Activated CD4-positive, alpha-beta T cell treated with anti-CD3 and anti-CD28 coated beads for 36 hours (primary cell): ENCODE measurements at regions of chr1 and their contacts with region 1.

Region 1: DNA sequence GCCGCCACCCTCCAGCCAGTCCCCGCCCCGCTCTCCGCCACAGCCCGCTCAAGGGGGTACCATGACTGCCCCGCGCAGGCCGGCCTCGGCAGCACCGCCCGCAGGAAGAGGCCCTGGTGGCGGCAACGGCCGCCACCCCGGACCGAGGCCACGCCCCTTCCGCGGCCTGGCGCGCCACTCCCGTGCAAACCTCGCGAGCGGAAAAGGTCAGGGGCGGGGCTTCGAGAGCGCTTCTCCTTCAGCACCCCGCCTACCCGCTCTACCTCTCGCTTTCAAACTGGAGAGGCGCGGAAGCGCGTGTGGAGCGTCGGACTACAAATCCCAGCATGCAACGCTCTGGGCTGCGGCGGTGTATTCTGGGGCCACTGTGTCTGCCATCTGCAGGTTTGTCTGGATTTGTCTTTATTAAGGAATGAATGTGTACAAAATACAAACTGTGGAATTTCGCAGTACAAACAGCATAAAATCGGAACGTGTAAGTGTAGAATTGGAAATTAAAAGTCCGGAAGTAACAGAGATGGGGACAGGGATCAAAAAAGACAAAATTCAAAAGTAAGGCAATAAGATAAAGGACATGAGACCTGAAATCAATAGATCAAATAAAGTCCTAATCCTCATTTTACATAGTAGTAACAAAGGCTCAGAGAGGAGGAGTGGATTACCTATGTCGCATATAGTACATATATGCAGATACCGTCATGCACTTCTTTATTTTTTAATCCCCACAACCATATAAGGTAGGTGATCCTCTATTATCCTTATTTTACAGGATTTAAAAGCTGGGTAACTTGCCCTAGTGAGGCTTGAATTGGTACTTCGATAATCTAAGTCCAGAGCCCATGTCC is 464 bp upstream of the ADSS2 start:
- DNase-seq: peak; percentile 99
- ATAC-seq: peak; percentile 91
- H3K4me3 Mint-ChIP-seq: peak overlapping the region; percentile 97
- H3K27ac Mint-ChIP-seq: peak overlapping the region; percentile 97
- H3K4me1 Mint-ChIP-seq: peaks cover 40% of the 10 kb centered on the region
- H3K27me3 Mint-ChIP-seq: no peaks in the 10 kb centered on the region

Region 2: GRCh38 chr1:244047621-244048471 is 404.3 kb before region 1 on chr1:
- CTCF ChIA-PET with region 1: no interaction called
- POLR2A ChIA-PET with region 1: no interaction called
- intact Hi-C with region 1: loop called (anchors 1 to 5 kb)
- DNase-seq: peak; percentile 98
- ATAC-seq: peak; percentile 92
- H3K4me3 Mint-ChIP-seq: peak overlapping the region; percentile 93
- H3K27ac Mint-ChIP-seq: peak overlapping the region; percentile 97
- H3K4me1 Mint-ChIP-seq: peaks cover 35% of the 10 kb centered on the region
- H3K27me3 Mint-ChIP-seq: no peaks in the 10 kb centered on the region

Region 3: GRCh38 chr1:244272471-244273261 is 179.5 kb before region 1 on chr1:
- CTCF ChIA-PET with region 1: no interaction called
- POLR2A ChIA-PET with region 1: no interaction called
- intact Hi-C with region 1: no loop called
- DNase-seq: peak; percentile 80
- ATAC-seq: peak; percentile 90
- H3K4me3 Mint-ChIP-seq: no peak overlapping the region
- H3K27ac Mint-ChIP-seq: no peak overlapping the region
- H3K4me1 Mint-ChIP-seq: peaks cover 9% of the 10 kb centered on the region
- H3K27me3 Mint-ChIP-seq: no peaks in the 10 kb centered on the region

Region 4: GRCh38 chr1:244319283-244320132 is 132.7 kb before region 1 on chr1:
- CTCF ChIA-PET with region 1: no interaction called
- POLR2A ChIA-PET with region 1: no interaction called
- intact Hi-C with region 1: loop called (anchors 2 to 5 kb)
- DNase-seq: peak; percentile 78
- ATAC-seq: peak; percentile 94
- H3K4me3 Mint-ChIP-seq: peak overlapping the region; percentile 31
- H3K27ac Mint-ChIP-seq: peak overlapping the region; percentile 66
- H3K4me1 Mint-ChIP-seq: peaks cover 25% of the 10 kb centered on the region
- H3K27me3 Mint-ChIP-seq: no peaks in the 10 kb centered on the region

Region 5: GRCh38 chr1:244325056-244325764 is 127.0 kb before region 1 on chr1:
- CTCF ChIA-PET with region 1: no interaction called
- POLR2A ChIA-PET with region 1: no interaction called
- intact Hi-C with region 1: loop called (anchors 2 to 5 kb)
- DNase-seq: peak; percentile 39
- ATAC-seq: peak; percentile 87
- H3K4me3 Mint-ChIP-seq: peak overlapping the region; percentile 74
- H3K27ac Mint-ChIP-seq: peak overlapping the region; percentile 88
- H3K4me1 Mint-ChIP-seq: peaks cover 24% of the 10 kb centered on the region
- H3K27me3 Mint-ChIP-seq: no peaks in the 10 kb centered on the region

Region 6: DNA sequence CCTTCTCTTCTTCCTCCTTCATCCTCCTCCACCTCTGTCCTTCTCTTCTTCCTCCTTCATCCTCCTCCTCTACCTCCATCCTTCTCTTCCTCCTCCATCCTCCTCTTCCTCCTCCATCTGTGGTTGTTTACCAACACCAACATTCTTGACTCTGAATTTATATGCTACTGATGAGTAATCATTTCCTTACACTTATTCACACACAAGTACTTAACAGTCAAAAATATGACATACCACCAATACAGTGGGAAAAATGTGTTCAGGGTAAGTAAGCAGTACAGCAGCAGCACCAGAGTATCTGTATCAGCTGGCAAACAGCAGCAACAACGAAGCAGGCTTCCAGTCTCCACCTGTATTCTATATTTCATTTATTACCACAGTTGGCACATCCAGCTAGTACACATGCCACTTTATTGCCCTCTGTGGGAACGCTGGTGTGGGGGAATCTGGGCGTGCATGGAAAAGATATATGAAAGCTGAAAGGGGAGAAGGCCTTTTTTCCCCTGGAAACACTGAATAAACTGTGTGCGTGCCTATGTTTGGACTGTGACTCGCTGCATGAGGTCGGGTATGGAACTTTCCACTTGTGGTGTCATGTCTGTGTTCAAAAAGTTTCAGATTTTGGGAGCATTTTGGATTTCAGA is 16.5 kb before region 1 on chr1:
- CTCF ChIA-PET with region 1: no interaction called
- POLR2A ChIA-PET with region 1: no interaction called
- intact Hi-C with region 1: loop called (anchors 1 to 2 kb)
- DNase-seq: peak; percentile 60
- ATAC-seq: peak; percentile 90
- H3K4me3 Mint-ChIP-seq: peak overlapping the region; percentile 10
- H3K27ac Mint-ChIP-seq: peak overlapping the region; percentile 96
- H3K4me1 Mint-ChIP-seq: peaks cover 47% of the 10 kb centered on the region
- H3K27me3 Mint-ChIP-seq: no peaks in the 10 kb centered on the region

Region 7: GRCh38 chr1:244652699-244653466 is 200.7 kb after region 1 on chr1 and contains the start of gene DESI2:
- CTCF ChIA-PET with region 1: interaction called, 3 read pairs
- POLR2A ChIA-PET with region 1: interaction called, 3 read pairs
- intact Hi-C with region 1: loop called (anchors 1 kb)
- DNase-seq: peak; percentile 98
- ATAC-seq: peak; percentile 96
- H3K4me3 Mint-ChIP-seq: peak within 1 kb of the TSS; percentile 76
- H3K27ac Mint-ChIP-seq: peak within 1 kb of the TSS; percentile 95
- H3K4me1 Mint-ChIP-seq: peaks cover 19% of the 10 kb centered on the region
- H3K27me3 Mint-ChIP-seq: no peaks in the 10 kb centered on the region
- total RNA-seq, gene DESI2: 24.5 to 26.0 TPM

Region 8: GRCh38 chr1:244843148-244843978 is 391.2 kb after region 1 on chr1:
- CTCF ChIA-PET with region 1: no interaction called
- POLR2A ChIA-PET with region 1: no interaction called
- intact Hi-C with region 1: no loop called
- DNase-seq: no peak
- ATAC-seq: no peak
- H3K4me3 Mint-ChIP-seq: no peak overlapping the region
- H3K27ac Mint-ChIP-seq: no peak overlapping the region
- H3K4me1 Mint-ChIP-seq: peaks cover 64% of the 10 kb centered on the region
- H3K27me3 Mint-ChIP-seq: no peaks in the 10 kb centered on the region